Left ventricle myocardium inferior (tissue), 1 donor: ENCODE measurements at regions of chr12 and their contacts with region 1.

Region 1: GRCh38 chr12:14629832-14630710 is 62.4 kb upstream of the PLBD1 start:
- DNase-seq: peak; percentile 58
- H3K4me3 ChIP-seq: no peak overlapping the region
- H3K27ac ChIP-seq: no peak overlapping the region
- H3K4me1 ChIP-seq: no peaks in the 10 kb centered on the region
- H3K27me3 ChIP-seq: no peaks in the 10 kb centered on the region
- CTCF ChIP-seq: peak; percentile 96

Region 2: GRCh38 chr12:14505626-14506596 is 124.2 kb before region 1 on chr12:
- intact Hi-C with region 1: loop called (anchors 10 kb)
- DNase-seq: no peak
- H3K4me3 ChIP-seq: no peak overlapping the region
- H3K27ac ChIP-seq: no peak overlapping the region
- H3K4me1 ChIP-seq: no peaks in the 10 kb centered on the region
- H3K27me3 ChIP-seq: no peaks in the 10 kb centered on the region
- CTCF ChIP-seq: no peak